ENCODE measurements at regions of chr18 and their contacts with region 1.

Region 1: DNA sequence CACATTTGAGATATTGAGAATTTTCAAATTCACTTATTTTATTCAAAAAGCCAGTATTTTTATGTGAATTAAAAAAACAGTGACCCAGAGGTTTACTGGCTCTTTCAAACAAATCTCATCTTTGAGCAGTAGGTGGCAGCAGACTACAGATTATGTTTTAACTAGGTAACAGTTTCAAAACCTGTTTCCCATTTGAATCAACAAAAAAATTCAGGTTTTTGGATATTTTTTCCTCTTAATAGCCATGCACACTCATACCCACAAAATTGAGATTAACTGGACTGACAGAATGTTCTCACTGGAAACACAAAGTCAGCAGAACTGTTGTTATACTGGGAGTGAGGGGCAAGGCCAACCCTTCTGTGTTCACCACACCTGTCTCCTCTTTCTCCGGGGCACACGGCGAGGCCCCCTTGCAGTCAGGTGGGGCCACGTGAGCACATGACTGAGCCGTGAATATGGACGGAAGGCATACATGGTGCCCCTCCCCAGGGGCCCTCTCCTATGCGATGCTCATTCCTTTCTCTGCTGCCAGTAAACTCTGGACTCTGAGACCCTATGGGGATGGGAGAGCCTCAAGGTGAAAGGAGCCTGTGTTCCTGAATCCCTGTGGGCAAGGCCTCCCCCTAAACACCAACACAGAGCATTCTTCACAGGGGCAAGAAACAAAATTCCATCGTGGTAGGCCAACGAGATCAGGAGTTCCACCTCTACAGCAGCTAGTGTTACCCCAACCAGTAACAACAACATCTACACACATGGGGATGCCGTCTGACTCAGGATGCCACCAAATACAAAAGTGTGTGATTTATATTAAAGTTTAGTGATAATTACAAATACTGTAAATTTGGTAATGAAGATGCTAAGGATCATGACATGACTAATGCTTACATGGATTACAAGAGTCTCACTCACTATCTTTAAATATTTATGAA is 80.4 kb downstream of the LPIN2 start:
- DNase-seq: no peak
- ATAC-seq: peak; percentile 72
- H3K4me3 ChIP-seq: no peak overlapping the region
- H3K27ac ChIP-seq: no peak overlapping the region
- H3K4me1 ChIP-seq: no peaks in the 10 kb centered on the region
- H3K27me3 ChIP-seq: no peaks in the 10 kb centered on the region

Region 2: DNA sequence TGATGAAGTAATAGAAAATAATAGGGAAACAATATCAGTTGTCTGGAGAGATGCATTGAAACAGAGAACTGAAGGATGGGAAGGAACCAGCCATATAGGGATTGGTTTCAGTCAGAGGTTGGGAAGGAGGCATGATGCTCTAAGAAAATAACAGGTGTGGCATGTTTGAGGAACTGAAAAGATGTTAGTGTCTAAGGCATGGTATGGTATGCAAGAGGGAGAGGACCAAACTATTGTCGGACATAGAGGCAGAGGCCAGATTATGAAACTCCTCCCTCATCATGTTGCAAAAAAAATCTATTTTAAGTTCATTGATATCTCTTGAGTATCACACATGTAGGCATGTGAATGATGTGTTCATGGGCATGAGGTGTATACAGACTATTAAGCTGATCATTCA is 134.6 kb before region 1 on chr18:
- intact Hi-C with region 1: no loop called
- DNase-seq: no peak
- ATAC-seq: no peak
- H3K4me3 ChIP-seq: no peak overlapping the region
- H3K27ac ChIP-seq: no peak overlapping the region
- H3K4me1 ChIP-seq: no peaks in the 10 kb centered on the region
- H3K27me3 ChIP-seq: no peaks in the 10 kb centered on the region

Region 3: GRCh38 chr18:2985628-2986027 is 53.1 kb after region 1 on chr18:
- intact Hi-C with region 1: loop called (anchors 5 kb)
- DNase-seq: no peak
- ATAC-seq: no peak
- H3K4me3 ChIP-seq: no peak overlapping the region
- H3K27ac ChIP-seq: no peak overlapping the region
- H3K4me1 ChIP-seq: peaks cover 0 to 7% of the 10 kb centered on the region in 2 donors
- H3K27me3 ChIP-seq: no peaks in the 10 kb centered on the region

Region 4: GRCh38 chr18:3062798-3063680 is 130.5 kb after region 1 on chr18:
- intact Hi-C with region 1: loop called (anchors 2 kb)
- DNase-seq: peak; percentile 77 to 89
- ATAC-seq: peak; percentile 71
- H3K4me3 ChIP-seq: no peak overlapping the region
- H3K27ac ChIP-seq: no peak overlapping the region
- H3K4me1 ChIP-seq: no peaks in the 10 kb centered on the region
- H3K27me3 ChIP-seq: no peaks in the 10 kb centered on the region

Region 5: GRCh38 chr18:3129053-3129864 is 196.7 kb after region 1 on chr18:
- intact Hi-C with region 1: loop called (anchors 5 kb)
- DNase-seq: peak; percentile 90 to 94
- ATAC-seq: peak; percentile 90
- H3K4me3 ChIP-seq: no peak overlapping the region
- H3K27ac ChIP-seq: no peak overlapping the region
- H3K4me1 ChIP-seq: no peaks in the 10 kb centered on the region
- H3K27me3 ChIP-seq: no peaks in the 10 kb centered on the region

Region 6: GRCh38 chr18:3245853-3246634 is 313.5 kb after region 1 on chr18:
- intact Hi-C with region 1: loop called (anchors 5 kb)
- DNase-seq: peak; percentile 94
- ATAC-seq: peak; percentile 92
- H3K4me3 ChIP-seq: peak overlapping the region; percentile 84 to 93
- H3K27ac ChIP-seq: peak overlapping the region; percentile 91 to 99
- H3K4me1 ChIP-seq: peaks cover 0 to 1% of the 10 kb centered on the region in 2 donors
- H3K27me3 ChIP-seq: no peaks in the 10 kb centered on the region